ENCODE measurements at regions of chr17 and their contacts with region 1.

Region 1: GRCh38 chr17:57243171-57243948 is 13.0 kb upstream of the MSI2 start:
- DNase-seq: peak; percentile 64
- H3K4me3 Mint-ChIP-seq: no peak overlapping the region
- H3K27ac Mint-ChIP-seq: peak overlapping the region; percentile 40
- H3K4me1 Mint-ChIP-seq: peaks cover 8% of the 10 kb centered on the region
- H3K27me3 Mint-ChIP-seq: peaks cover 17% of the 10 kb centered on the region

Region 2: GRCh38 chr17:57130761-57131461 is 112.4 kb before region 1 on chr17:
- intact Hi-C with region 1: loop called (anchors 5 kb)
- DNase-seq: peak; percentile 64
- H3K4me3 Mint-ChIP-seq: no peak overlapping the region
- H3K27ac Mint-ChIP-seq: no peak overlapping the region
- H3K4me1 Mint-ChIP-seq: peaks cover 5% of the 10 kb centered on the region
- H3K27me3 Mint-ChIP-seq: peaks cover 1% of the 10 kb centered on the region

Region 3: DNA sequence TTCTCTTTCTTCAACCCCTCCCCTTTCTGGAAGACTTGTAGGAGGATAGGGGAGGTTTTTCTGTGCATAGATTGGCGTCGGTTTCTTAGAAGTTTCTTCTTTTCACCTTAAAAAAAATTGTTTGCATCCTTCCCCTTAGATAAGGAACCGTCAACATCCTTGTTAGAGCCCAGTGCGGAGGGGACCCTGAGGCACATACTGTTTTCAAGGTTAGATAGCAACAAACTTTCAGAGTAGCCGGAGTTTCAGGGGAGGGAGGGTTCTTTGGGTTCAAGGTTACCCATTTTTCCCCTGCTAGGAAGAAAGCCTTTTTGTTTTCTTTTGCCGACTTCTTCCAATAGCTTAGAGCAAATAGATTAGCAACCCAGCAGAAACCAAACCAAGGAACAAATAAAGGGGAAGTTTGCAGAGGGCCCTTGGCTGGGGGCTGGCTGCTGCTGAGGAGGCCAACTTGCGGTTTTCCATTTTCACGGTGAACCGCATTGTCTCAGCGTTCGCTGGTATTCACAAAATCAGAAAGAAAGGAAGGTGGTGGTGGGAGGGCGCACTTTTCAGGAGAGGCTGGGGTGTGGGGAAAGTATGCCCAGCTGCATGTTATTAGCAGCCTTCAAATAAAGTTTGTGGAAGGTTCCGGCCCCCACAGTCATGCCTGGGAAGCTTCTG is 41.8 kb after region 1 on chr17:
- intact Hi-C with region 1: loop called (anchors 5 kb)
- DNase-seq: peak; percentile 58
- H3K4me3 Mint-ChIP-seq: peak overlapping the region; percentile 68
- H3K27ac Mint-ChIP-seq: peak overlapping the region; percentile 88
- H3K4me1 Mint-ChIP-seq: peaks cover 76% of the 10 kb centered on the region
- H3K27me3 Mint-ChIP-seq: no peaks in the 10 kb centered on the region

Region 4: GRCh38 chr17:57315061-57316015 is 72.0 kb after region 1 on chr17:
- intact Hi-C with region 1: no loop called
- DNase-seq: no peak
- H3K4me3 Mint-ChIP-seq: no peak overlapping the region
- H3K27ac Mint-ChIP-seq: no peak overlapping the region
- H3K4me1 Mint-ChIP-seq: peaks cover 8% of the 10 kb centered on the region
- H3K27me3 Mint-ChIP-seq: no peaks in the 10 kb centered on the region

Region 5: DNA sequence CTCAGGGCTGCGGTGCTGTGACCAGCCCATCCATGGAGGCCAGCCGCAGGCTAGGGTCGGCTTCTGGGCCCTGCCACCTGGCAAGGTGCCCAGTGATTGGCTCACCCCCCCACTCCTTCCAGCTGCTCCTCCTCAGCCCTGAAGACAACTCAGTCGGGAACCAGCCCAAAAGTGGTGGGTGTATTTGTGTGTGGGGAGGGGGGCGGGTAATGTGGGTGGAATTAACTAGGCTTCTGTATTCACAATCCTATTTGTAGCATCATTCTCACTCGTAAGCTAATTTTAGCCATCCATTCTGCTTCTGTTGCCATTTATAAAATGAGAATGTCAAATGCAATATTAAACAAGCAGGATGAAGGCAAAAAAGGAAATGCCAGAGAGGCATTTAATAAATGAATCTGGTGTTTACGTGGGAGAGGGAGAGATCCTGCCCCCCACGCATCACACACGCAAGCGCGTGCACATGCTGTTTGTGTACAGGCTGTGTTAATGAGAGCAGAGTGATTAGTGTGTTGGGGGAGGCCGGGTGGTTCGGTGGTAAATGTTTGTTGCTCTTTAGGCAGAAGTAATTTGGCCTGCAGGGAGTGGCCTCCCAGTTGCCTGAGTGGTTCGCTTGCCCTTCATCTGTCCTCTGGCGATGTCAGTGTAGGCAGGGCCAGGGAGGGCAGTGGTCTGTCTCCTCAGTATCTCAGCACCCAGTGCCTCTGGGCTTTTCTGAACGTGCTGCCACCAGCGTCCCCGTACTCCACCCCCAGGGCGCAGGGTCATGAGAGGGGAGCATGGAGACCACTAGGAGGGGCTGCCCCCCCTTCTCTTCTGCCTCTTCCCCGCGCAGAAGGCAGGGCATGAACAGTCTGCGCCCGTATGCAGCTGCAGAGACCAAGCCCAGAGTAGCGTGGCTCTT is 361.7 kb after region 1 on chr17:
- intact Hi-C with region 1: loop called (anchors 2 kb)
- DNase-seq: no peak
- H3K4me3 Mint-ChIP-seq: no peak overlapping the region
- H3K27ac Mint-ChIP-seq: peak overlapping the region; percentile 88
- H3K4me1 Mint-ChIP-seq: peaks cover 54% of the 10 kb centered on the region
- H3K27me3 Mint-ChIP-seq: no peaks in the 10 kb centered on the region

Region 6: DNA sequence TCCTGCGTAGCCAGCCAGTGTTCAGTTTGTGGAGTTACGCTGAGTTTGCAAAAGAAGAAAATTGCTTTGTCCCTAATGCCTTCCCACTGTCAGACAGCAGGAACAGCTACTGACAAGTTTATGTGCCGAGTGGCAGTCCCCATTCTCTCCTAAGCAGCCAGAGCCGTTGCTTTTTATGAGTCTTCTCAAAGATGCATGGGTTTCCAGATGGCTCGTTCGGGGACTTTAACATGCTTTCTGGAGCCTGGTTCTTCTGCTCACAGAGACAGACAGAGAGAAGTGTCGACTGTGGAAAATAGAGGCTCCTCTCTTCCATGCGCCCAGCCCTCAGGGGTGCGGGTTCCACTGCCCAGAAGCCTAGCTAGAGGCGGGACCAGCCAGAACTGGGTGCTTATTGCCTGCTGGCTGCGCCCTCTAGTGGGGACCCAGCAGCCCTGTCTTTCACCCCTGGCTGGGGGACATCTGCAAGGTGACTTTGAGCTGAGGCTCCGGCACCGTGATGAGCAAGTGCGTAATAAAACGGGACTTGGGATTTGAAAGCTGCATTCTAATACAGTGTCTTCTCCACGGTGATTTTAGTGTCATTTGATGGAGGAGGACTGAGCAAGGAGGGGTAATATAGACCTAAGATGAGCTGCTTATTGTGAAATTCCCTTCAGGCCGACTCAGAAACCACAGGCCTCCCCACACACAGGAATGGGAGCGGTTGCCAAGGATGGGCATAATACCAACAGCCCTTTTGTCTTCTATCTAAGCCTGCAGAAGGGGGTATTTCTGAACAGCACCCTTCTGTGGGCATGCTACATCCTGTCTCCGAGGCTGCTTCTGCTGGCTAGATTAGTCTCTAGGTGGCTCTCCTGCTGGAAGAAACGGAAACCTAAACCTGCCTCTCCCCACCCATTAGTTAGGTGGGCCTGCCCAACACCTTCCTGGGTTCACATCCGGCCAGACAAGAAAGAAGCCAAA is 428.6 kb after region 1 on chr17:
- intact Hi-C with region 1: loop called (anchors 2 kb)
- DNase-seq: peak; percentile 53
- H3K4me3 Mint-ChIP-seq: no peak overlapping the region
- H3K27ac Mint-ChIP-seq: peak overlapping the region; percentile 45
- H3K4me1 Mint-ChIP-seq: peaks cover 5% of the 10 kb centered on the region
- H3K27me3 Mint-ChIP-seq: no peaks in the 10 kb centered on the region

Region 7: GRCh38 chr17:57747221-57748017 is 504.1 kb after region 1 on chr17:
- intact Hi-C with region 1: loop called (anchors 5 kb)
- DNase-seq: peak; percentile 10
- H3K4me3 Mint-ChIP-seq: no peak overlapping the region
- H3K27ac Mint-ChIP-seq: no peak overlapping the region
- H3K4me1 Mint-ChIP-seq: peaks cover 7% of the 10 kb centered on the region
- H3K27me3 Mint-ChIP-seq: peaks cover 13% of the 10 kb centered on the region

Measured in activated T-helper 2 cell treated with anti-CD3 and anti-CD28 coated beads, Interferon-gamma antibody, Interleukin-2, Interleukin-4, amounts not matched to agents 10 μg/mL and 5 μg/mL and 100 μg/mL, durations not matched to agents 14 hours and 24 hours and 36 hours (primary cell).